ENCODE measurements at regions of chr17 and their contacts with region 1.

Region 1: GRCh38 chr17:47831003-47831933 is at the starts of genes LRRC46 and MRPL10:
- DNase-seq: peak; percentile 95
- H3K4me3 ChIP-seq: peak within 1 kb of the TSS; percentile 65 to 92 (median 84)
- H3K27ac ChIP-seq: peak within 1 kb of the TSS; percentile 85 to 90 (median 88)
- H3K4me1 ChIP-seq: peaks cover 17 to 24% (median 19%) of the 10 kb centered on the region in 4 donors
- H3K27me3 ChIP-seq: no peaks in the 10 kb centered on the region
- CTCF ChIP-seq: peak in 4 of 5 experiments; percentile 15 to 47 (median 24)
- EP300 ChIP-seq: no peak
- POLR2A ChIP-seq: peak; percentile 90
- total RNA-seq, gene LRRC46: 0.48 to 0.80 TPM in 2 of 4 donors, not detected in the others
- total RNA-seq, gene MRPL10: 12.9 to 41.8 (median 32.0) TPM

Region 2: DNA sequence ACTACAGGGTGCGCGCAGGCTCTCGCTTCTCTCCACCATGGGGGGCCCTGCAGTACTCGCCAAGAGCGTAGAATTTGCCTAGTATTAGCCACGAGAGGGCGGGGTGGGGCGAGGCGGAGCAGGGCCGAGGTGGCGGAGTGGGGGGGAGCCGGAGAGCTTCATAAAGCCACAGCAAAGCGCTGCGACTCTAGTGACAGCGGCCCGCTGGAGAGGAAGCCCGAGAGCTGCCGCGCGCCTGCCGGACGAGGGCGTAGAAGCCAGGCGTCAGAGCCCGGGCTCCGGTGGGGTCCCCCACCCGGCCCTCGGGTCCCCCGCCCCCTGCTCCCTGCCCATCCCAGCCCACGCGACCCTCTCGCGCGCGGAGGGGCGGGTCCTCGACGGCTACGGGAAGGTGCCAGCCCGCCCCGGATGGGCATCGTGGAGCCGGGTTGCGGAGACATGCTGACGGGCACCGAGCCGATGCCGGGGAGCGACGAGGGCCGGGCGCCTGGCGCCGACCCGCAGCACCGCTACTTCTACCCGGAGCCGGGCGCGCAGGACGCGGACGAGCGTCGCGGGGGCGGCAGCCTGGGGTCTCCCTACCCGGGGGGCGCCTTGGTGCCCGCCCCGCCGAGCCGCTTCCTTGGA is 98.1 kb before region 1 on chr17 and contains the start of gene TBX21:
- in situ Hi-C with region 1: no loop called
- intact Hi-C with region 1: no loop called
- DNase-seq: peak; percentile 87
- H3K4me3 ChIP-seq: peak within 1 kb of the TSS; percentile 15 to 53 (median 38)
- H3K27ac ChIP-seq: peak within 1 kb of the TSS; percentile 4 to 60 (median 52)
- H3K4me1 ChIP-seq: peaks cover 0 to 14% (median 9%) of the 10 kb centered on the region in 4 donors
- H3K27me3 ChIP-seq: peaks cover 65% of the 10 kb centered on the region
- CTCF ChIP-seq: peak in 1 of 5 experiments; percentile 14
- EP300 ChIP-seq: no peak
- POLR2A ChIP-seq: peak; percentile 52
- total RNA-seq, gene TBX21: 0.27 to 18.3 (median 4.9) TPM in 3 of 4 donors, not detected in the other

Region 3: DNA sequence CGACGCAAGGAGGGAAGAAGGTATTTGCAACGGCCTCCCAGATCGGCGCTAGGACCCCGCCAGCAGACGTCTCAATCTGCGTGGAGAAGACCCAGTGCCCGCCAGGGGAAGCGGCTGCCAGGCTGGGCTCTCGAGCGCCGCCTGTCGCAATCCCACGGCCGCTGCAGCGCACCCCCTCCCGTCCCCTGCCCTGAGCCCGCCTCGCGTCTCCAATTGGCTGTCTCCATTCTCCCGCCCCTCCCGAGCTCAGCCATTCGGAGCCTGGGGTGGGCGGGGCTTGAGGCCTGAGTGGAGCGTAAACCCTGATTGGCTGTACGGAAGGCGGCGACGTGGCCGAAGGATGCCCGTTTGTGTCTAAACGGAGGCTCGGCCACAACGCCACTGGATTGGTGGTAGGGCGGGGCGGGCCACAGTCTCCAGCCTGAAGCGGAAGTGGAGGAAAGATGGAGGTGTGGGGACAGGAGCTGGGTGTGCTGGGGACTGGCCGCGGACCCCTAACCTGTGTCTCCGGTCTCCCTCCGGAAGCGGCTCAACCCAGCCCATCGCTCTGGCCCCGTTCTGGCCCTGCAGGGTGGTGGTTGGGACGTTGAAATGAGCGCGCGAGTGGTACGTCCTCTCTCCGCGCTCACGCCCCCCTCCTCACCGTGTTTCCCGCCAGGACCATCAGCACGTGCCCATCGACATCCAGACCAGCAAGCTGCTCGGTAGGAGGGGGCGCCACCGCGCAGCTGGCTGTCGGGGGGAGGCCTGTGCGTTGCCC is 139.6 kb after region 1 on chr17 and contains the start of gene CDK5RAP3:
- in situ Hi-C with region 1: loop called in 1 of 4 experiments (anchors 25 kb)
- intact Hi-C with region 1: no loop called
- DNase-seq: peak; percentile 100
- H3K4me3 ChIP-seq: peak within 1 kb of the TSS; percentile 63 to 96 (median 77)
- H3K27ac ChIP-seq: peak within 1 kb of the TSS; percentile 79 to 91 (median 88)
- H3K4me1 ChIP-seq: peaks cover 20 to 58% (median 37%) of the 10 kb centered on the region in 4 donors
- H3K27me3 ChIP-seq: no peaks in the 10 kb centered on the region
- CTCF ChIP-seq: peak; percentile 86 to 100 (median 98)
- EP300 ChIP-seq: no peak
- POLR2A ChIP-seq: peak; percentile 78
- total RNA-seq, gene CDK5RAP3: 159 to 540 (median 296) TPM

Measured in transverse colon (tissue), 4 donors.